OCI-LY7 (cell line): ENCODE measurements at regions of chr10 and their contacts with region 1.

Region 1: GRCh38 chr10:45594276-45595106 is 78.1 kb downstream of the ZFAND4 start:
- DNase-seq: peak; percentile 98
- H3K4me3 ChIP-seq: peak overlapping the region; percentile 88
- H3K27ac ChIP-seq: no peak overlapping the region
- H3K4me1 ChIP-seq: peaks cover 28% of the 10 kb centered on the region
- CTCF ChIP-seq: peak; percentile 32; the same call in 1 of the 2 replicates

Region 2: DNA sequence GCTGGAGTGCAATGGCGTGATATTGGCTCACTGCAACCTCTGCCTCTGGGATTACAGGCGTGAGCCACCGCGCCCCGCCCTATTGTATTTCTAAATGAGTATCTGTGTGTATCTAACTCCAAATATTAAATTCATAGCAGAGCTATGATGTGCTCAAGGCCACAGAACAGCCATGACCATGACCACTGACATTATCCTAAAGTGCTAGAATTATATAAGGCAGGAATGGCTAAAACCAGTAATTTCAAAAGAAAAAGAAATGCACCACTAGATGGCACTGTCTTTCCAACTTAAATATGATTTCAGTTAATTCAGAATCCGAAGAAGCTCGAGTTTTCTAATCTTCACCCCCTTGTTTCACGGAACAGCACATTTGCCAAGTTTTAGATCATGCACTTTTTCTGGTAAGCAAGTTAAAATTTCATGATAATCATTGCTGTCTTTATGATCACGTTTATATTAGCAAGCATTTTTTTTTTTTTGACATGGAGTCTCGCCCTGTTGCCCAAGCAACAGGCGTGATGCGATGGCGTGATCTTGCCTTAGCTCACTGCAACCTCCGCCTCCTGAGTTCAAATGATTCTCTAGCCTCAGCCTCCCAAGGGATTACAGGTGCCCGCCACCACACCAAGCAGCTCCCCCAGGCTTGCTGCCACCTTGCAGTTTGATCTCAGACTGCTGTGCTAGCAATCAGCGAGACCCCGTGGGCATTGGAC is 344.4 kb before region 1 on chr10:
- CTCF ChIA-PET with region 1: no interaction called
- POLR2A ChIA-PET with region 1: no interaction called
- intact Hi-C with region 1: loop called (anchors 5 kb)
- DNase-seq: peak; percentile 91
- H3K4me3 ChIP-seq: peak overlapping the region; percentile 54
- H3K27ac ChIP-seq: peak overlapping the region; percentile 72
- H3K4me1 ChIP-seq: peaks cover 10% of the 10 kb centered on the region
- CTCF ChIP-seq: peak; percentile 84

Region 3: GRCh38 chr10:45520476-45520875 is 74.0 kb before region 1 on chr10:
- CTCF ChIA-PET with region 1: no interaction called
- POLR2A ChIA-PET with region 1: no interaction called
- intact Hi-C with region 1: loop called (anchors 5 kb)
- DNase-seq: peak; percentile 65
- H3K4me3 ChIP-seq: no peak overlapping the region
- H3K27ac ChIP-seq: no peak overlapping the region
- H3K4me1 ChIP-seq: no peaks in the 10 kb centered on the region
- CTCF ChIP-seq: peak; percentile 80

Region 4: DNA sequence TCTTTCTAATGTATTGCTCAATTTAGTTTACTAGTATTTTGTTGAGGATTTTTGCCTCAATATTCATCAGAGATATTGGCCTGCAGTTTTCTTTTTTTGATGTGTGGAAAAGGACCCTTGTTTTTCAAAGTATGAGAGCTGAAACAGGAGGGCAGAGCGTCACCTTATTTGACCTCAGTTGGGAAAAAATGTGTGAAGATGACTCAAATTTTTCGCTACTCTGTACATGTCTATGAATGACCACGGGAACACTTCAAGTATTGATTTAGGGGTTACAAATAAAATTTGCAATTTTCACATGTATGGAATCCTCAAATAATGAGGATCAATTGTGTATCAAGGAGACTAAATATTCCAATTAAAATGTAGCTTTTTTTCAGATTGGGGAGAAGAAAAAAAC is 25.0 kb before region 1 on chr10:
- CTCF ChIA-PET with region 1: no interaction called
- POLR2A ChIA-PET with region 1: no interaction called
- intact Hi-C with region 1: no loop called
- DNase-seq: no peak
- H3K4me3 ChIP-seq: no peak overlapping the region
- H3K27ac ChIP-seq: no peak overlapping the region
- H3K4me1 ChIP-seq: no peaks in the 10 kb centered on the region
- CTCF ChIP-seq: no peak

Region 5: DNA sequence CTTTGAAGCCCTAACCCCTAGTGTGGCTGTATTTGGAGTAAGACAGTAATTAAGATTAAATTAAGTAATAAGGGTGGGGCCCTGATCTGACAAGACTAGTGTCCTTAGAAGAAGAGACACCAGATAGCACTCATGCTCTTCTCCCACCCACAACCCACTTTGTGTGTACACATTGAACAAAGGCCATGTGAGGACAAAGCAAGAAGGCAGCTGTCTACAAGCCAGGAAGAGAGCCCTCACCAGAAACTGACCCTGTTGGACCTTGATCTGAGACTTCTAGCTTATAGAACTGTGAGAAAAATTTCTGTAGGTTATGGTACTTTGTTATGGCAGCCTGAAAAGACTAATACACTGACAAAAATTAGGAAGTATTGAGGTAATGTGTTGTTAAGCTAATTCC is 18.2 kb after region 1 on chr10:
- CTCF ChIA-PET with region 1: no interaction called
- POLR2A ChIA-PET with region 1: interaction called, 13 read pairs
- intact Hi-C with region 1: no loop called
- DNase-seq: no peak
- H3K4me3 ChIP-seq: no peak overlapping the region
- H3K27ac ChIP-seq: no peak overlapping the region
- H3K4me1 ChIP-seq: no peaks in the 10 kb centered on the region
- CTCF ChIP-seq: no peak